ENCODE measurements at regions of chr7 and their contacts with region 1.

Region 1: GRCh38 chr7:100015232-100016209 is at the start of gene ZKSCAN1:
- DNase-seq: peak; percentile 91
- H3K4me3 Mint-ChIP-seq: peak within 1 kb of the TSS; percentile 92
- H3K27ac Mint-ChIP-seq: peak within 1 kb of the TSS; percentile 94
- H3K4me1 Mint-ChIP-seq: peaks cover 47% of the 10 kb centered on the region
- H3K27me3 Mint-ChIP-seq: no peaks in the 10 kb centered on the region
- total RNA-seq, gene ZKSCAN1: 49.1 to 50.6 TPM

Region 2: GRCh38 chr7:99733448-99733847 is 282.1 kb before region 1 on chr7:
- CTCF ChIA-PET with region 1: no interaction called
- POLR2A ChIA-PET with region 1: no interaction called
- intact Hi-C with region 1: no loop called
- DNase-seq: peak; percentile 10
- H3K4me3 Mint-ChIP-seq: no peak overlapping the region
- H3K27ac Mint-ChIP-seq: no peak overlapping the region
- H3K4me1 Mint-ChIP-seq: peaks cover 2% of the 10 kb centered on the region
- H3K27me3 Mint-ChIP-seq: no peaks in the 10 kb centered on the region

Region 3: GRCh38 chr7:99997545-99998137 is 17.9 kb before region 1 on chr7:
- CTCF ChIA-PET with region 1: interaction called, 14 read pairs
- POLR2A ChIA-PET with region 1: interaction called, 9 read pairs
- intact Hi-C with region 1: loop called (anchors 2 kb)
- DNase-seq: peak; percentile 82
- H3K4me3 Mint-ChIP-seq: peak overlapping the region; percentile 70
- H3K27ac Mint-ChIP-seq: peak overlapping the region; percentile 56
- H3K4me1 Mint-ChIP-seq: peaks cover 9% of the 10 kb centered on the region
- H3K27me3 Mint-ChIP-seq: no peaks in the 10 kb centered on the region

Region 4: DNA sequence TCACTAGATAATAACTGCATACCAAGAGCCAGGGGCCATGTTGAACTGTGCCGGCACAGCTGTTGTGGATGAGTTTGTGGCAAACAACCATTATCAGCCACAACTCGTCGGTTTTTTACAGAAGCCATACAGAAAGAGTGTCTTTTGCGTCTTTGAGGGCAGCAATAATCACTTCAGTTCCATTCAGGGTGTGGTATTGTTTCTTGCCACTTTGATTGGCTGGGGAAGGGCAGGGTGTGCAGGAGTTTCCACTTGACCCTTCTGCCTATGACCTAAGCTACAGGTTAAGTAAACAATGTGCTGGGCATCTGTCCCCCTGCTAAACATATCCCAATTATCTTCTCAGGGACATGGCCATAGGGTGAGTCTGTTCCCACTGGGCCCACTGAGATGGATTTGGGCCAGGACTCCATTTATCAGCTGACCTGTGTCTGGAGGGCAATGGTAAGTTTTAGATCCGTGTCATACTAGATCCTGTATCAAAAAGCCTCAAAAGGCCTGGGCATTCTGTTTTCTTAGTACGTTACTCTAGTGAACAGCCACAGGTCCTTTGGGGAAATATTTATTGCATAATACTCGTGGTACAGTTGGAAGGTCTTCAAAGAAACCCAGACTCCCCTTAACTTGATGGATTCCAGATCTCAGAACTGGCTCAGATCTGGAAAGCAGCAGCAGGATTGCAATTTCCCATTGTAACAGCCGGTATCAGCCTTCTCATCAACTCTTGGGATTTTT is 50.1 kb after region 1 on chr7:
- CTCF ChIA-PET with region 1: no interaction called
- POLR2A ChIA-PET with region 1: no interaction called
- intact Hi-C with region 1: no loop called
- DNase-seq: no peak
- H3K4me3 Mint-ChIP-seq: no peak overlapping the region
- H3K27ac Mint-ChIP-seq: no peak overlapping the region
- H3K4me1 Mint-ChIP-seq: no peaks in the 10 kb centered on the region
- H3K27me3 Mint-ChIP-seq: no peaks in the 10 kb centered on the region

Region 5: GRCh38 chr7:100081535-100082102 is 66.1 kb after region 1 on chr7 and contains the start of gene ZNF3:
- CTCF ChIA-PET with region 1: interaction called, 6 read pairs
- POLR2A ChIA-PET with region 1: interaction called, 3 read pairs
- intact Hi-C with region 1: loop called (anchors 1 kb)
- DNase-seq: peak; percentile 99
- H3K4me3 Mint-ChIP-seq: peak within 1 kb of the TSS; percentile 83
- H3K27ac Mint-ChIP-seq: peak within 1 kb of the TSS; percentile 85
- H3K4me1 Mint-ChIP-seq: peaks cover 29% of the 10 kb centered on the region
- H3K27me3 Mint-ChIP-seq: no peaks in the 10 kb centered on the region
- total RNA-seq, gene ZNF3: 18.0 to 18.6 TPM

Measured in activated CD4-positive, alpha-beta memory T cell treated with anti-CD3 and anti-CD28 coated beads for 36 hours (primary cell).